HCT116 (cell line): ENCODE measurements at regions of chr9 and their contacts with region 1.

Region 1: DNA sequence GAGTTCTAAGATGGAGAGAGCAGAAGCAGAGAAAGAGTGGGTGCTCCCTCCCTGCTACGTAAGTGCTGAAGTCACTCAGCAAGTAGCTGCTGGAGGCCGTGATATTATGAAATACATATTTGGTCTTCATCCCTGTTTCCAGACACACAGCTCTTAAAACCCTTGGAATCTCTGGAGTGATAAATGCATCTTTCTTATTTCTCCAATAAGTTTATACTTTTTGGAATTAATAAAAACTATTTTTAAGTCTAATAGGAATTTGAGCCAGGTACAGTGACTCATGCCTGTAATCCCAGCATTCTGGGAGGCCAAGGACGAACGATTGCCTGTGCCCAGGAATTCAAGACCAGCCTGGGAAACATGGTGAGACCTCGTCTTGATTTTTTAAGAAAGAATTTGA is 60.6 kb downstream of the AUH start:
- DNase-seq: peak; percentile 23
- ATAC-seq: peak; percentile 44
- H3K4me3 ChIP-seq: peak overlapping the region in 1 of 2 experiments; percentile 19; a peak in 1 of 4 replicates
- H3K27ac ChIP-seq: peak overlapping the region; percentile 93
- H3K4me1 ChIP-seq: peaks cover 45 to 61% of the 10 kb centered on the region in 2 experiments
- H3K27me3 ChIP-seq: no peaks in the 10 kb centered on the region
- CTCF ChIP-seq: no peak
- POLR2A ChIP-seq: no peak
- RAD21 ChIP-seq: no peak

Region 2: DNA sequence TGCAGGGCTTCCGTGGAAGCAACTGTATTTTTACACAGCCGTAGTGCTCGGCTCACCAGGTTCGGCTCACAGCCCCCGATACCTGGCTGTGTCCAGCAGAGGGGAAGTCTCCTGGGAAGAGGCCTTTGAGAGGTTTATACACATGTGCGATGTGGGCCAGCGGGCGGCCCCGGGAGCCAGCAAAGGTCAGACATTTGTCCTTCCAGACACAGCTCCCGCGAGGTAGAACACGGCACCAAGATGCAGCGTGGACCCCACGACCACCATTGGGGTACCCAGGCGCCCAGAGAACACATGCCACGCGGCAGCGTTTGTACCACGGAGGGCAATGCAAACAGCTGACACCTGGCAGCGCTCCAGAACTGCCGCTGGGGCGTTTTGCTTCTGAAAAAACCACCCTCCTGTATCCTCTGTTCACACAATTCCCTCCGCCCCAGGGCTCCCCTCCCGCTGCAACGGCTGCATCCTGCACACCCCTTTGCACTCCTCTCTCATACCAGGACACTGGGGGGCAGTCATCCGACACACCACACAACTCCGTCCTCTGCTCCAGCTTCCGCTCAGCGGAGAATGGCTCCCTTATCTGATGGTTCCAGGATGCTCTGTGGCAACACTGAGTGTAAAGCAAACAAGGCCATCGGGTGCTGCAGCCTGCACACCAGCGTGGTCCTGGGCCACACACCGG is 264.2 kb before region 1 on chr9:
- CTCF ChIA-PET with region 1: no interaction called
- POLR2A ChIA-PET with region 1: no interaction called
- RAD21 ChIA-PET with region 1: no interaction called
- intact Hi-C with region 1: loop called (anchors 5 kb)
- DNase-seq: peak; percentile 47
- ATAC-seq: peak; percentile 90
- H3K4me3 ChIP-seq: no peak overlapping the region
- H3K27ac ChIP-seq: peak overlapping the region; percentile 73
- H3K4me1 ChIP-seq: peaks cover 21 to 29% of the 10 kb centered on the region in 2 experiments
- H3K27me3 ChIP-seq: no peaks in the 10 kb centered on the region
- CTCF ChIP-seq: peak; percentile 56 to 61 (median 60); a peak in 5 of 6 replicates
- POLR2A ChIP-seq: no peak
- RAD21 ChIP-seq: peak; percentile 94

Region 3: DNA sequence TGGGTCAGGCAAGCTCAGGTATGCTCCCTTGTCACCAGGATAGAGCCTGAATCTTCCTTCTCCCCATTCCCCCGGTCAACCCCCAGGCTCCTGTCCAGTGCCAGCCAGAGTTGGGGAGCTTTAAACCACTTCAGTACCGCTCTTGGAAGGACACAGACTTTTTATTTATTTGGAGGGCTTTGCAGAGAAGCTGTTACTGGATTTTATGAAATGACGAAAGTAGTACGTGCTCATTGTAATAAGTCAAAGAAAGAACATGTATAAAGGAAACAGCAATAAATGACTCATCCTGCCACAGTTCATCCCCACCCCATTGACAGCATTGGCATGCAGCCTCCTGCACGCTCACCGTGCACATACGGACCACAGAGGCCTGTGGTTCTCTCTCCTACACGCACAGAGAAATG is 169.7 kb before region 1 on chr9:
- CTCF ChIA-PET with region 1: no interaction called
- POLR2A ChIA-PET with region 1: no interaction called
- RAD21 ChIA-PET with region 1: no interaction called
- intact Hi-C with region 1: loop called (anchors 10 kb)
- DNase-seq: peak; percentile 61
- ATAC-seq: peak; percentile 95
- H3K4me3 ChIP-seq: peak overlapping the region in 1 of 2 experiments; percentile 27; a peak in 2 of 4 replicates
- H3K27ac ChIP-seq: peak overlapping the region; percentile 2; the same call in 1 of the 2 replicates
- H3K4me1 ChIP-seq: peaks cover 12 to 20% of the 10 kb centered on the region in 2 experiments
- H3K27me3 ChIP-seq: no peaks in the 10 kb centered on the region
- CTCF ChIP-seq: no peak
- POLR2A ChIP-seq: no peak
- RAD21 ChIP-seq: no peak; the same call in 1 of the 2 replicates

Region 4: DNA sequence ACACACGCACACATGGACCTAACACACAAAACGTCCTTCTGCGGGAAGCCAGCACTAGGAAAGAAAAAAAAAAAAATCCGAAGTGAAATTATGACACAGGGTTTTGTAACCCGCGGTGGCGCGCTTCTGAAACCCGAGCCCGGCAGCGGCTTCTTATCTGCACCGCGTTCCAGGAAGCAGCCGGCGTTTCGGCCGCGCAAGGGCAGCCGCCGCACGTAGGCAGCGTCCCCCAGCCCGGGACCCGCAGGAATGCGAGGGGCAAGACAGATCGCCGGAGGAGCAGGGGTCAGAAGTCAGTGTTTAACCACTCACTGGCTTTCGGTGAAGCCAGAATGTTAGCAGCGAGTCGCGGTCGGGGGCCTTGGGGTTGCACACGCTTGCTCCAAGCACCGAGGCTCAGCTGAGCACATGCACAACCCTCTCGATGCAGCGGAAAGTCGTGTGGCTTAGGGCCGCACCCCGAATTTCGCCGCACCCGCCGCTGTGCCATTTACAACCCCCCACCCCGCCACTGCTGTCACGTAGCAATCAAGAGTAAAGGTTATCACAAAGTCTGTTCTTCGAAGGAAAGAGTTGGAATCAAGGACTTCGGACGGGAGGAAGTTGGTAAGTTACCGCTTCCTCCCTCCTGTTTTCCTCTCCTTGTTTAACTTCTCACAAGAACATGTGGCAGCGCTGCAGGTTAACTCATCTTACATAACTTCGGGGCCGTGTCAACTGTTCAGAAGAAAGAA is 107.3 kb before region 1 on chr9:
- CTCF ChIA-PET with region 1: no interaction called
- POLR2A ChIA-PET with region 1: no interaction called
- RAD21 ChIA-PET with region 1: no interaction called
- intact Hi-C with region 1: loop called (anchors 5 kb)
- DNase-seq: peak; percentile 64
- ATAC-seq: peak; percentile 56
- H3K4me3 ChIP-seq: peak overlapping the region; percentile 42 to 58
- H3K27ac ChIP-seq: peak overlapping the region; percentile 100
- H3K4me1 ChIP-seq: peaks cover 62 to 83% of the 10 kb centered on the region in 2 experiments
- H3K27me3 ChIP-seq: no peaks in the 10 kb centered on the region
- CTCF ChIP-seq: no peak
- POLR2A ChIP-seq: no peak
- RAD21 ChIP-seq: no peak

Region 5: GRCh38 chr9:91354881-91355280 is 53.7 kb after region 1 on chr9:
- CTCF ChIA-PET with region 1: no interaction called
- POLR2A ChIA-PET with region 1: no interaction called
- RAD21 ChIA-PET with region 1: no interaction called
- intact Hi-C with region 1: loop called (anchors 5 kb)
- DNase-seq: no peak
- ATAC-seq: no peak
- H3K4me3 ChIP-seq: no peak overlapping the region
- H3K27ac ChIP-seq: no peak overlapping the region
- H3K4me1 ChIP-seq: peaks cover 4 to 7% of the 10 kb centered on the region in 2 experiments; a peak in 1 of 4 replicates
- H3K27me3 ChIP-seq: no peaks in the 10 kb centered on the region
- CTCF ChIP-seq: no peak
- POLR2A ChIP-seq: no peak
- RAD21 ChIP-seq: no peak

Region 6: GRCh38 chr9:91727316-91727861 is 426.2 kb after region 1 on chr9:
- CTCF ChIA-PET with region 1: no interaction called
- POLR2A ChIA-PET with region 1: no interaction called
- RAD21 ChIA-PET with region 1: no interaction called
- intact Hi-C with region 1: no loop called
- DNase-seq: peak; percentile 16
- ATAC-seq: peak; percentile 100
- H3K4me3 ChIP-seq: no peak overlapping the region
- H3K27ac ChIP-seq: no peak overlapping the region
- H3K4me1 ChIP-seq: peaks cover 0 to 4% of the 10 kb centered on the region in 2 experiments; a peak in 2 of 4 replicates
- H3K27me3 ChIP-seq: no peaks in the 10 kb centered on the region
- CTCF ChIP-seq: peak; percentile 67 to 79 (median 68); a peak in 5 of 6 replicates
- POLR2A ChIP-seq: no peak
- RAD21 ChIP-seq: peak; percentile 76